ENCODE measurements at regions of chr11 and their contacts with region 1.

Region 1: GRCh38 chr11:95705485-95706124 is 84.0 kb downstream of the FAM76B start:
- DNase-seq: peak; percentile 87
- H3K4me3 ChIP-seq: no peak overlapping the region
- H3K27ac ChIP-seq: no peak overlapping the region
- H3K4me1 ChIP-seq: no peaks in the 10 kb centered on the region
- H3K27me3 ChIP-seq: peaks cover 13 to 17% of the 10 kb centered on the region in 2 experiments
- CTCF ChIP-seq: peak; percentile 83 to 93
- POLR2A ChIP-seq: no peak

Region 2: DNA sequence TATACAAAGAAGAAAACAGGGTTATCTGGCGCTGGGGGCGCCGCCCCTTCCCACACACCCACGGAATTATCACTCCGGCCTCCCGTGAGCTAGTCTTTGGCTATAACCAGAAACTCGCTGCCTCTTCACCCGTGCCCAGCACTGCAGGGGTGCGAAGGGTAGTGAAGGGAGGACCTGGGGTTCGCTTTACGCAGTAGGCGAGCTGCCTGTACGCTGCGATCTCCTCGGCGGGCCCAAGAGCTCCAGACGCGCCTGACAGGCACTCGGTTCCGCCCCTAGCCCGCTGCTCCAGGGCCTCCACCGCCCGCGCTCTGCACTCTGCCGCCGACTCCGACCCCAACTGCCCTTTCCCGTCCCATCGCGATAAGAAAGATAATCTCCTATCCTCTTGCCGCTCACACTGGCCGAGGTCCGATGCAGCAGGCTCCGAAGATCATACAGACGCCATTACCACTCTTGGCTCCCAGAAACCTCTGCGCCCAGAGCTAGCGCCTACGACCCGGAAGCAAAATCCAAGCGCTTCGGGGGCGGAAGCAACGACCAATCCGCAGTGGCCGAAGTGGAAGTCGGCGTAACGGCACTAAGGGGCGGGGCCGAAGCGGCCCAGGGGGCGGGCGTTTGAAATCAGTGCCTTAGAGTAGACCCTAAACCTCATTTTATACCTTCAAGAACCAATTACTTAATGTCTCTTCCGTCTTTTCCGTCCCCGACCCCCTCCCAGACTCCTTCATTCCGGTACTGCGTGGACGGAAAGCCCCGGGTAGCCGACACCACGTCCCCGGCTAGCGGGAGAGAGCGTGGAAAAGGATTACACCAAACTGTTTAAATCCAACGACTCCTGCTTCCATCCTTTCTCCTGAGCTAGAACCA is 732.3 kb before region 1 on chr11 and contains the starts of genes CWC15 and KDM4D:
- CTCF ChIA-PET with region 1: interaction called, 4 read pairs
- POLR2A ChIA-PET with region 1: no interaction called
- dilution Hi-C with region 1: no loop called
- intact Hi-C with region 1: loop called (anchors 1 kb)
- DNase-seq: peak; percentile 95
- H3K4me3 ChIP-seq: peak within 1 kb of the TSS; percentile 77 to 94 (median 92)
- H3K27ac ChIP-seq: peak within 1 kb of the TSS; percentile 76
- H3K4me1 ChIP-seq: peaks cover 9% of the 10 kb centered on the region
- H3K27me3 ChIP-seq: no peaks in the 10 kb centered on the region
- CTCF ChIP-seq: no peak
- POLR2A ChIP-seq: peak; percentile 91
- total RNA-seq, gene CWC15: 72.0 and 75.6 TPM in 2 replicates
- total RNA-seq, gene KDM4D: 1.0 and 1.3 TPM in 2 replicates

Region 3: GRCh38 chr11:95231127-95231880 is 474.3 kb before region 1 on chr11 and contains the start of gene SESN3:
- CTCF ChIA-PET with region 1: interaction called, 16 read pairs
- POLR2A ChIA-PET with region 1: no interaction called
- dilution Hi-C with region 1: no loop called
- intact Hi-C with region 1: no loop called
- DNase-seq: peak; percentile 99
- H3K4me3 ChIP-seq: peak within 1 kb of the TSS; percentile 43 to 65 (median 49)
- H3K27ac ChIP-seq: no peak within 1 kb of the TSS
- H3K4me1 ChIP-seq: peaks cover 11% of the 10 kb centered on the region
- H3K27me3 ChIP-seq: peaks cover 15 to 43% of the 10 kb centered on the region in 2 experiments
- CTCF ChIP-seq: no peak
- POLR2A ChIP-seq: no peak
- total RNA-seq, gene SESN3: 5.6 and 6.9 TPM in 2 replicates

Region 4: DNA sequence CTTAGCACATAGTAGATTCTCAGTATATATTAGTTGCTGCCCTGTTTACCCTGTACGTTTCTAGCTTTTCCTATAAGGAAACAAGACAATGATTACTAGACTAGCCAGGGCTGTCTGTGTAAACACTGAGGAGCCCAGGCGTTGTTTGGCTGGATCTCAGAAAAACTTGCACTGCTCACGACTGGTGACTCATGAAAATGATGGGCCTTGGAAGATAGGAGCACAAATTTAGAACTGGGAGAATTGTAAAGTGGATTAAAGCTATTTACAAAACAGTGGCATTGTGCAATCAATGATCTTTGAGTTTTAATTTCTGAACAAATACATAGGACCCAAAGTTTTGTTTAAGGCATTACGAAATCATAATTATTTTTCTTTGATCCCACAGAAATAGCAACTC is 192.9 kb before region 1 on chr11:
- CTCF ChIA-PET with region 1: interaction called, 3 read pairs
- POLR2A ChIA-PET with region 1: no interaction called
- dilution Hi-C with region 1: no loop called
- intact Hi-C with region 1: loop called (anchors 5 kb)
- DNase-seq: peak; percentile 41
- H3K4me3 ChIP-seq: no peak overlapping the region
- H3K27ac ChIP-seq: no peak overlapping the region
- H3K4me1 ChIP-seq: no peaks in the 10 kb centered on the region
- H3K27me3 ChIP-seq: no peaks in the 10 kb centered on the region
- CTCF ChIP-seq: no peak
- POLR2A ChIP-seq: no peak

Region 5: GRCh38 chr11:95674657-95675358 is 30.8 kb before region 1 on chr11:
- CTCF ChIA-PET with region 1: no interaction called
- POLR2A ChIA-PET with region 1: no interaction called
- dilution Hi-C with region 1: no loop called
- intact Hi-C with region 1: no loop called
- DNase-seq: no peak
- H3K4me3 ChIP-seq: no peak overlapping the region
- H3K27ac ChIP-seq: no peak overlapping the region
- H3K4me1 ChIP-seq: no peaks in the 10 kb centered on the region
- H3K27me3 ChIP-seq: no peaks in the 10 kb centered on the region
- CTCF ChIP-seq: no peak
- POLR2A ChIP-seq: no peak

Region 6: DNA sequence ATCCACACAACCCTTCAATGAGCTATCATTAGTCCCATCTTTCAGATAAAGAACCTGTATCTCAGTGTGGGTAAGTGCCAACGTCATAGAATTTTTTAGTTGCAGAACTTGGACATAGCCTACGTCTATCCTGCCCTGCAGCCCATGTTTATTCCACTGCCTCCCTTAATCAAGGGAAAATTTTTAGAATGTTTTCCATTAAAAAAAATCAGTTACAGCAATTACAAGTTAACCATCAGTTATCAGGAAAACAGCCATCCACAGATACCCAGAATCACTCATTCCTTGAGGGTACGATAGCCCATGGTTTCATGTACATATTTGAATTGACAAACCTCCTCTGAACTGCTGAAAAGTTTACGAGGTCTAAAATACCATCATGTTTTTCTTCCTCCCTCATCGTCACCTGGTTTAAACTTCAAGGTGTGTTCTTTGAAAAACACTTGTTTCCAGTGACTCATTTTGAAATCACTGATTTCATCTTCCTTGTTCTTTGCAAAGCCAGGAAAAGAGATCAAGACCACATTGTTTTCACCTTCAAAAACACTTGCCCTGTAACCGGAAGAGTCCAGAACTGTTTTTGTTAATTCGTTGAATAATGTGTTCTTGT is 16.9 kb before region 1 on chr11:
- CTCF ChIA-PET with region 1: interaction called, 49 read pairs
- POLR2A ChIA-PET with region 1: no interaction called
- dilution Hi-C with region 1: no loop called
- intact Hi-C with region 1: no loop called
- DNase-seq: peak; percentile 35
- H3K4me3 ChIP-seq: no peak overlapping the region
- H3K27ac ChIP-seq: no peak overlapping the region
- H3K4me1 ChIP-seq: no peaks in the 10 kb centered on the region
- H3K27me3 ChIP-seq: peaks cover 0 to 3% of the 10 kb centered on the region in 2 experiments
- CTCF ChIP-seq: no peak
- POLR2A ChIP-seq: no peak

Region 7: GRCh38 chr11:95736355-95736754 is 30.8 kb after region 1 on chr11:
- CTCF ChIA-PET with region 1: interaction called, 11 read pairs
- POLR2A ChIA-PET with region 1: no interaction called
- dilution Hi-C with region 1: no loop called
- intact Hi-C with region 1: no loop called
- DNase-seq: no peak
- H3K4me3 ChIP-seq: no peak overlapping the region
- H3K27ac ChIP-seq: no peak overlapping the region
- H3K4me1 ChIP-seq: no peaks in the 10 kb centered on the region
- H3K27me3 ChIP-seq: peaks cover 3 to 15% of the 10 kb centered on the region in 2 experiments
- CTCF ChIP-seq: no peak
- POLR2A ChIP-seq: no peak

Region 8: DNA sequence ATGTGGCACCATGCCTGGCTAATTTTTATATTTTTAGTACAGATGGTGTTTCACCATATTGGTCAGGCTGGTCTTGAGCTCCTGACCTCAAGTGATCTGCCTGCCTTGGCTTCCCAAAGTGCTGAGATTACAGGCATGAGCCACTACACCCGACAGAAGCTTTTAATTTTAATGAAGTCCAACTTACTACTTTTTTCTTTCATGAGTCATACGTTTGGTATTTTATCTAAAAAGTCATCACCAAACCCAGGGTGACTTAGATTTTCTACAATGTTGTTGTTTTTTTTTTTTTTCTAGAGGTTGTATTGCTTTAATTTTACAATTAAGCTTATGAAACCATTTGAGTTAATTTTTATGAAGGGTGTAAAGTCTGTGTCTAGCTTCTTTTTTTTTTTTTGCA is 719.1 kb after region 1 on chr11:
- CTCF ChIA-PET with region 1: interaction called, 6 read pairs
- POLR2A ChIA-PET with region 1: no interaction called
- dilution Hi-C with region 1: no loop called
- intact Hi-C with region 1: loop called (anchors 2 kb)
- DNase-seq: peak; percentile 51
- H3K4me3 ChIP-seq: no peak overlapping the region
- H3K27ac ChIP-seq: no peak overlapping the region
- H3K4me1 ChIP-seq: peaks cover 2% of the 10 kb centered on the region
- H3K27me3 ChIP-seq: peaks cover 0 to 17% of the 10 kb centered on the region in 2 experiments
- CTCF ChIP-seq: no peak
- POLR2A ChIP-seq: no peak

Measured in endothelial cell of umbilical vein (primary cell).